ENCODE measurements at regions of chr2 and their contacts with region 1.

Region 1: DNA sequence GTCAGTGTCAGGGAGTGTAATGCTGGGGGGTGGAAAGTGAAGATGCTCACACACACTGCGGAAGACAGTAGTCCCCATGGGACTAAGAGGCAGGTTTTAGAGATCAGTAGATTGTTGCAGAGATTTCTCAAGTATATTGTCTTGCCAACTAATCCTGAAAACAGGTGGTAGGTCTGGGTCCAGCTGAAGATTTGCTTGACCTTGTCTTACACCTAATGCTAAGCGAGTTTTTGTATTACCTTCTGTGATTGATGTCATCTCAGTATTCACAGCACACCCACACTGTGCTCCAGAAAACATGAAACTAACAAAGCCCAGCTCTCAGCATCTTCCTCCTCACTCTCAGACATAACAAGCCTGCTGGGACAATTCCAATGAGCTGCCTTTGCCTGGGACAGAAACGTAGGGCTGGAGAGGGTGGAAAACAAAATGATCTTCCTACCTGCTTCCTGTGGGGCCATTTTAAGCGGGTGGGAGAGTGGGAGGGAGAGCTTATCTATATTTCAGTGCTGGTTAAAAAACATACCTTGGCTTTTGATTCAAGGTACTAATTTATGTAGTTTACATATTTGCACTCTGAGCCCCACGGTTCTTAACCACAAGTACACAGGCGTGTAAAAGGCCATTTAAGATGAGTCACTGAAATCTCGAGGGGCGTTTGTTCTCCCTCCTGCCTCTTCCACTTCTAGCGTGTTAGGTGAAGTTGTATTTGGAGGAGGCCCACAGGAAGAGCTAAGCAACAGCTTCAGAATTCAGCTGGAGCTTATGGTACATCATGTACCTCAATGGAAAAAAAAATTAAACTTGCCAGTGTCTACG is 23.1 kb upstream of the RBMS1 start:
- DNase-seq: peak; percentile 26
- H3K4me3 Mint-ChIP-seq: no peak overlapping the region
- H3K27ac Mint-ChIP-seq: peak overlapping the region; percentile 10
- H3K4me1 Mint-ChIP-seq: peaks cover 33% of the 10 kb centered on the region
- H3K27me3 Mint-ChIP-seq: no peaks in the 10 kb centered on the region

Region 2: GRCh38 chr2:160493227-160494028 is 23.3 kb before region 1 on chr2 and contains the start of gene RBMS1:
- CTCF ChIA-PET with region 1: no interaction called
- POLR2A ChIA-PET with region 1: no interaction called
- intact Hi-C with region 1: loop called (anchors 2 kb)
- DNase-seq: peak; percentile 59
- H3K4me3 Mint-ChIP-seq: peak within 1 kb of the TSS; percentile 95
- H3K27ac Mint-ChIP-seq: peak within 1 kb of the TSS; percentile 93
- H3K4me1 Mint-ChIP-seq: peaks cover 36% of the 10 kb centered on the region
- H3K27me3 Mint-ChIP-seq: no peaks in the 10 kb centered on the region
- total RNA-seq, gene RBMS1: 37.9 to 40.0 TPM

Region 3: DNA sequence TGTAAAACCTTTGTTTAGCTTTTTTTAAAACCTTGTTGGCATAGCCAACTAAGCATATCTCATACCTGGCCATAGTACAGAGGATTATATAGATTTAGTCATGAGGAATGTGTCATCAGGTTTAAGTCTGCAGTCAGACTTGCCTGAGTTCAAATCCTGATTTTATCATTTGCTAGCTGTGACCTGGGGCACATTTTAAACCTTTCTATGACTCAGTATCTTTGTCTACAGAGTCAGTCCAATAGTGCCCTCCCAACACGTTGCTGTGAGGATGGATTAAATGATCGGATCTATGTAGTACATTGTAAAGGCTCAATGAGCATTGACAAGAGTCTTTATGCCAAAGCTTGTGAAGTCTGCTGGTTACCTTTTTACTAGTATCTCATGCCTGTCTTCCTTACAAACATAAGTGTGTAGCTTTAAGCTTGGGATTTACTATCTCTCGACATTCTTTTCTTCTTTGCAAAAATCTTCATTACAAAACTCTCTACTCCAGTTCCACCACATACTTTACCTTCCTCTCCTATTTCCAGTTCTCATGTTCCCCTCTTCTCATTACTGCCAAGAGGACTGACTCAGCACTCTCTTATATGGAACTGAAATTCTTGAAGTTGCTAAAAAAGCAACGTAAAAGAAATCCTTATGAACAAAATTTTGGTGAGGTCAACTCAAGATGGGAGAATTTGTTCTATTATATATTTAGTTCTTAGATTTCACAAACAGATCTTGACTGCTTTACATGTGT is 45.0 kb after region 1 on chr2:
- CTCF ChIA-PET with region 1: no interaction called
- POLR2A ChIA-PET with region 1: no interaction called
- intact Hi-C with region 1: no loop called
- DNase-seq: no peak
- H3K4me3 Mint-ChIP-seq: no peak overlapping the region
- H3K27ac Mint-ChIP-seq: no peak overlapping the region
- H3K4me1 Mint-ChIP-seq: peaks cover 5% of the 10 kb centered on the region
- H3K27me3 Mint-ChIP-seq: no peaks in the 10 kb centered on the region

Measured in activated CD4-positive, alpha-beta memory T cell treated with anti-CD3 and anti-CD28 coated beads for 36 hours (primary cell).